BJ (cell line): ENCODE measurements at regions of chr20 and their contacts with region 1.

Region 1: DNA sequence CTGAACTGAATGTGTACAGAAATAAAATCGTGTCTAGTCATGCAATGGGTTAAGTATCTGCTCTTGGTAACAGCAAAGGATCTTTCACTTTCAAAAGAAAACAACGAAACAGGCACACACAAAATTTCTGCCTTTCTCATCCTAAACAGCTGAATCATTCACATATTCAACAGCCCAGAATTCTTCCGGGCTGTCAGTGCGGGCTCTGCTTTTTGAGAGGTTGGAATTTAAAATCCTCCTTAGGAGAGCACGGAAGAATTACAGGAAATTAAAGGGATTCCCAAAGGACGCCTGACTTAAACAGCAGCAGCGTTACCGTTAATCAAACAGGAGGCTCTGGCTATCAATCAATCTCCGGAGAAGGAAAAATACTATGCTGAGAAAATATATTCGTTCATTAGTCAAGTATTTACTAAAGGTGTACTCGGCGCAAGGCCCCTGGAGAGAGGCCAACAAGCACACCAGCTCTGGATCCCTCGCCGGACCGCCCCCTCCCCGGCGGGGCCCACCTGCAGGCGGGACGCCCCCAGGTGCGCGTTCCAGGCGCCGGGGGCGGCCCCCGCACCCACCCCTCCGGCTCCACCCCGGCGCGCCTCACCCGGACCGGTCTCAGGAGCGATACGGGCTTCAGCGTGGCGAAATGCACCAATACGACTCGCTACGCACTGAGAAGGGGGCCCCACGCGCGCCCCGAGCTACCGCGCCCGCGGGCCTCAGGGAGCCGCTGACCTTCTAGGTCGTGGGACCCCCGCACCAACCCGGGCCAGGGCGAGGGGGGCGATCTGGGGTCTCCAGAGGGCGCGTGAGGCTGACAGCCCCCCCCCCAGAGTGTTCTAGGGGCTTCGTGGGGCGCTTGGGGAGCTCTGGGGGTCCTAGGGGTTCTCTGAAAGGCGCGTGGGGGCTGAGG is 1.0 kb downstream of the NAPB start:
- DNase-seq: peak; percentile 35
- H3K4me3 ChIP-seq: peak overlapping the region; percentile 74
- H3K27me3 ChIP-seq: peaks cover 4% of the 10 kb centered on the region
- CTCF ChIP-seq: no peak

Region 2: DNA sequence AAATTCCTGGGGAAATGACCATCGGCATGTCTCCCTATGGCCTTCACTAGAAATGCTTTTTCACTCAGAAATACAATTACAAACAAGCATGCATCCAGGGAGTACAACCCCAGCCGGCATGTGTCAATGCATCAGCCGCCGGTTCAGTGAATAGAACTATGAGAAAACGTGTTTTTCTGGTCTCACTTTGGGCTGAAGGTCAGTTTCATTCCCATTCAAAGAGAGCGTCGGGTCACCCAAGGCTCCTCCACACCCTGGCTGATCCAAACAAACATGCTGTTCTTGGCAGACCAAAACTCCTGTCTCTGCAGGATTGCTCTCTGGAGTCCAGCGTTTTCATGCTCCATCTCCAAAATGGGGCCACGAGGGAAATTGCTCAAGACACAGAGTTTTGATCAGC is 105.1 kb before region 1 on chr20:
- CTCF ChIA-PET with region 1: no interaction called
- POLR2A ChIA-PET with region 1: no interaction called
- DNase-seq: no peak
- H3K4me3 ChIP-seq: no peak overlapping the region
- H3K27me3 ChIP-seq: 0 out of 2 replicates have a peak, but pooled peaks cover 2% of the 10 kb centered on the region
- CTCF ChIP-seq: no peak

Region 3: DNA sequence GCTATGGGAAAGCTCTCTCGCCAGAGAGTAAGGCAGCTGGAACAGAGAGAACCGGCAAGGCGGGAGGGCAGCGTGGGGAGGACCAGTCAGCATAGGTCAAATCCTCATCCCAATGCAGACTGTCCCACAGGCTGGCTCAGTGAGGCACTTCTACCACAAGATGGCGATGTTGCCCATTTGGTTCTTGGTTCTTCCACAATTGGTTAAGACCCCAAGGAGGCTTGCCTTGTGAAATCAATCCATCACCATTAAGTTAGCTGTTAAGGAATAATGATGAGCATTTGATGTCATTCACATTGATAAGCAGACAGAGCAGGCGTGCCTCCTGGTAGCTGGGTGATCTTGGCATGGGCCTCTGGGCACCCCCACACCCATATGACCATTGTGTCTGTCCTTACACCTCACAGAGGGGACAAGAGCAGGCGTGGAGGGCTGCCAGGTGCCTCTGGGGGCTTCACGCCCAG is 21.6 kb after region 1 on chr20:
- CTCF ChIA-PET with region 1: interaction called, 10 read pairs
- POLR2A ChIA-PET with region 1: no interaction called
- DNase-seq: peak; percentile 19
- H3K4me3 ChIP-seq: no peak overlapping the region
- H3K27me3 ChIP-seq: no peaks in the 10 kb centered on the region; the same call in 1 of the 2 replicates
- CTCF ChIP-seq: peak; percentile 92

Region 4: GRCh38 chr20:23655491-23656211 is 235.4 kb after region 1 on chr20:
- CTCF ChIA-PET with region 1: no interaction called
- POLR2A ChIA-PET with region 1: no interaction called
- DNase-seq: no peak
- H3K4me3 ChIP-seq: no peak overlapping the region
- H3K27me3 ChIP-seq: no peaks in the 10 kb centered on the region
- CTCF ChIP-seq: no peak